Colonic mucosa (tissue), 4 donors: ENCODE measurements at regions of chr4 and their contacts with region 1.

Region 1: GRCh38 chr4:128809477-128810330 is at the start of gene JADE1:
- DNase-seq: peak; percentile 96
- H3K4me3 ChIP-seq: peak within 1 kb of the TSS; percentile 60
- H3K27ac ChIP-seq: peak within 1 kb of the TSS; percentile 91
- H3K4me1 ChIP-seq: no peaks in the 10 kb centered on the region
- H3K27me3 ChIP-seq: no peaks in the 10 kb centered on the region
- CTCF ChIP-seq: peak; percentile 22
- total RNA-seq, gene JADE1: 8.3 to 9.6 TPM

Region 2: GRCh38 chr4:128454281-128455075 is 355.2 kb before region 1 on chr4:
- intact Hi-C with region 1: loop called (anchors 5 kb)
- DNase-seq: peak; percentile 64
- H3K4me3 ChIP-seq: no peak overlapping the region
- H3K27ac ChIP-seq: no peak overlapping the region
- H3K4me1 ChIP-seq: no peaks in the 10 kb centered on the region
- H3K27me3 ChIP-seq: no peaks in the 10 kb centered on the region
- CTCF ChIP-seq: peak; percentile 57

Region 3: DNA sequence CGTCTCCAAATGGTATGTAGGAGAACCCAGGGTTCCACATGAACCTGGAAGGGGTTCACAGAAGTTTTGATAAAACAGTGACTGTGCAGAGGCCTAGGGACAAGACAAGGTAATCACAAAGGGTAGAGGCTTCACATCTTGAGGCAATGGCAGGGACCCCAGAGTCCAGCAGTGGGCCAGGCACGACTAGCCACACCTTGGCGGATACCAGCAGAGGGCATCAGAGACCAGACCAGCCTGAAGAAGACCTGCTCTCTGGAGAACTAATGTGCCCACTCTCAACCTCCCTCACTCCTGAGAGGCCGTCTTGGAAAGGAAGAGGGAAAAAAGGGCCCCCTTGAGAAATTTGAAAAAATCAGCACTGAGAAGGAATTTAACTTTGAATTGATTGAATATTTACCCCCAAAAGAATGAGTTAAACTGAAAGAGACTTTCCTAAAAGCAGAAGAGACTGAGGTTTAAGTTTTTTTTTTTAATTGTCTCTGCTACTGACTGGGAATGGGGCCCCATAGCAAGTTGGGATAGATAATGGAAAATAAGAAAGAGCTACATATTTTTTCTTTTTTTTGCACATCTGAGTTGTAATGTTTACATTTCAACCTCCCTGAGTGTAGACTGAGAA is 244.0 kb before region 1 on chr4:
- intact Hi-C with region 1: loop called (anchors 5 kb)
- DNase-seq: peak; percentile 52
- H3K4me3 ChIP-seq: no peak overlapping the region
- H3K27ac ChIP-seq: no peak overlapping the region
- H3K4me1 ChIP-seq: no peaks in the 10 kb centered on the region
- H3K27me3 ChIP-seq: no peaks in the 10 kb centered on the region
- CTCF ChIP-seq: peak; percentile 45

Region 4: DNA sequence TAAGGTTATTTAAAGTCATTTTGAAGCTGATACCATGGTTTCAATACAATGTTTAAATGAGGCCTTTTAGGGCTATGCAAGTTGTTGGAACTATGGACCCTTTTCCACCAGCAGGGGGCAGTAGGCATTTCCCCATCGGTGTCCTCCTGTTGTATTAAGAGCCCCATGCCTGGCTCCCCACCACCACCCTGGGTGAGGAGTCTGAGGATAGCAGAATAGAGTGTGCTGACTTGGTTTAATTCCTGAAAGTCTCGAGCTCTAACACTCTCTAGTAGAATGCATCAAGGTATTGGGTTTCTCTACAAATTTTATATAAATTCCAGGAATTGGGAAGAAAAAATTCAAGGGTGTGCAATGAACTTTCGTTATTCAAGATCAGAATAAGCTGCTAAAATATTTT is 235.0 kb before region 1 on chr4:
- intact Hi-C with region 1: loop called (anchors 5 kb)
- DNase-seq: peak; percentile 90
- H3K4me3 ChIP-seq: no peak overlapping the region
- H3K27ac ChIP-seq: no peak overlapping the region
- H3K4me1 ChIP-seq: no peaks in the 10 kb centered on the region
- H3K27me3 ChIP-seq: no peaks in the 10 kb centered on the region
- CTCF ChIP-seq: peak; percentile 53